AG04450 (cell line): ENCODE measurements at regions of chr3 and their contacts with region 1.

Region 1: DNA sequence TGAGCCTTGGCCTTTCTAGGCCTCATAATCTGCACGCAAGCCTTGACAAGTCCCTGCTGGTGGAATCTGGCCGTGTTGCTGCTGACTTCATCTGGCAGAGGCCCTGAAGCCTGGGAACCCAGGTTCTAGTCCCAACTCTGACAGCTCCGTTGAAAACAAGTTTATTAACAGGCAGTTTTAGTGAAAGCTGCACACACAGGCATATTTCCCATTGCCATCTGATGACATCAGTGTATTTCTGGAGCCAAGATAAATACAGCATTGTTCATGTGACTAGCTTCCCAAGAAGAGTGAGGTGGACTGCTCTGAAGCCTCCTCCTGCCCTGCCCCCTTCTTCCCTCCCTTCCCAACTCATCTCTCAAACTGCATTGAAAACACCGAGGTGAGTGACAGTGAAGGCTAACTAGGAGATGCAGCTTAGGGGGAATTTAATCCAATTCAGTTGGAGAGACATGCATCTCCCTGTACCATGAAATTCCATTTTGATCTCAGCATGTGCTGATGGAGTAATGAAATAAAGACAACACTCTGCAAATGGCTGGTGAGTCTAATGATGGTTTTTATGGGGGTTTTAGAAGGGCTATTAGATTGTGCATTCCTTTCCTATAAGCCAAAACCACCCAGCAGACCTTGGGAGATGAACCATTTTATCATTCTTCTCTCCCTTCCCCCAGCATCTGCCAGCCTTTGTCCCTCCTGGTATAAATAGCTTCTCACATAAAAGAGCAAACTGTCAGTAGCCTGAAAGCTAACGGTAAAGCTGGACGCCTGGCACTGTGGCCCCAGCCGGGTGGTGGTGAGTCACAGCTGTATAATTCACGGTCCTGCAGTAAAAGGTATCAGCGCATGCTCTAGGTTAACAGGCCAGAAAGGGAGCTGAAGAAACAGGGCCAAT is 38.0 kb downstream of the PRICKLE2 start:
- DNase-seq: peak; percentile 95
- H3K4me3 ChIP-seq: peak overlapping the region; percentile 20
- H3K27ac ChIP-seq: peak overlapping the region; percentile 94
- H3K27me3 ChIP-seq: no peaks in the 10 kb centered on the region
- CTCF ChIP-seq: no peak

Region 2: DNA sequence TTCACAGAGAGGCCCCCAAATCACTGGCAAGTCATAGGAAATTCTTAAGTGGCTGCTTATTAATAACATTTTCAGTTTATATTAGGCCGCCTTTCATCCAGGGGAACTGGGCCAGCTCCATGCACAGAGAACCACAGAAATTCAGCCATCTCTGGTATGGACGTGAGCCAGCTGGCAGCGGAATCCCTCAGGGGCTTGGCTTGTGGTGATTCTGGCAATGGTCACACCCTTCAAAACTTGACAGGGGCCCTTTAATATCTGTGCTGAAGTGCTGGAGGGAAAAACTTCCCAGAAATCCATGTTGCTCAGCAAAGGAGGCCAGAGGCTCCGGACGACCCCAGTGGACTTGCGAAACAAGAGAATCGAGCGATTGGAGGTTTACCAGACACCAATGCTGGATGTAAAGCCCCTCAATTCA is 26.7 kb after region 1 on chr3:
- CTCF ChIA-PET with region 1: no interaction called
- POLR2A ChIA-PET with region 1: interaction called, 12 read pairs
- DNase-seq: no peak
- H3K4me3 ChIP-seq: peak overlapping the region; percentile 54
- H3K27ac ChIP-seq: peak overlapping the region; percentile 89
- H3K27me3 ChIP-seq: no peaks in the 10 kb centered on the region
- CTCF ChIP-seq: no peak

Region 3: GRCh38 chr3:64267721-64268604 is 80.7 kb after region 1 on chr3:
- CTCF ChIA-PET with region 1: no interaction called
- POLR2A ChIA-PET with region 1: interaction called, 10 read pairs
- DNase-seq: peak; percentile 36
- H3K4me3 ChIP-seq: peak overlapping the region; percentile 78
- H3K27ac ChIP-seq: peak overlapping the region; percentile 68
- H3K27me3 ChIP-seq: no peaks in the 10 kb centered on the region
- CTCF ChIP-seq: 0 out of 2 replicates have a peak, but pooled peaks have one; percentile 14